ENCODE measurements at regions of chr11 and their contacts with region 1.

Region 1: DNA sequence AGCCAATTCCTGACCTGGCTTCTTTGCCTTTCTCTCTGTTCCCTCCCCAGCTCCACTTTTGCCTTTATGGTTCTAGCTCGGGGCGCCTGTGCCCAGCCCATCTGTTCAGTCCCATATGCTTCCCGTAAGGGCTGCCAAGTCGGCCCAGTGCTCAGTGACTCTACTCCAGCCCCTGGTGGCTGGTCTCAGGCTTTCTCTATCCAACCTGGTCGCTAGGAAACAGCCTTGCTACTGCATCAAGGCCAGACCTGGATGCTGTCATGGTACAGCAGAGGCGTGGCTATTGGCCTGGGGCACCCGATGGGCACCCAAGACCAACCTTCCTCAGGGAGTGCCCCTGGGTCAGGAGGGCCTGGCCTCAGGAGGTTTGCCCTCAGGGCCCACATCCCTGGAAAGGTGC is 178.0 kb downstream of the DSCAML1 start:
- DNase-seq: no peak
- ATAC-seq: peak; percentile 13

Region 2: DNA sequence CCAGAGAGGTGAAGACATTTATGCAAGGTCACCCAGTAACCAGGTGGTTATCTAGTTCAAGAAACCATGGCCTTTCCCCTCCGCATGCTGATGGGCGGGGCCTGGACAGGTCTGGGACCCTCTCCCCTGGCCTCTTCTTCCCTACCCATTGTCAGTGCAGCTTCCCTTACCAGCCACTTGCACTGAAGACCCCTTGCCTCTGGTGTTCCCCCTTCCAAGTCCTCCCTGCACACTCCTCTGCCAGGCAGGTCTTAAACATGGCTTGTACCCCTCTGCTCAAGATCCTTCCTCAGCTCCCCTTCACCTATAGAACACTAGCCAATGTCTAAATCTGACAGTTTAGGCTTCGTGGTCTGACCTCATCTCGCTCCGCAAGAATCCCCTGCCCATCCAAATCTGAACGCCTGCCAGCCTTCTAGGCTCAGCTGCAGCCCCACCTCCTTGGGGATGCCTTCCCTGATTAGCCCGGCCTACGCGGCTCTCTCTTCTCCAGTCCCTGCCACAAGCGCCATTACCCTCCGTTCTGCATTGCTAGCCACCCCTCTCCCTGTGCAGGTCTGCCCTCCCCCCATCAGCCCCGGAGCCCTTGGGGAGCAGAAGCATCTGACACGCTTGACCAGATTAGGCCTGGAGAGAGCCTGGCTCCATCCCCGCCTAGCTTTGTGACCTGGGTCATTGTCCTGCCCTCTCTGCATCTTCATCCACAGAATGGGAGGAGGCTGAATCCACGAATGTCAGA is 35.8 kb before region 1 on chr11:
- intact Hi-C with region 1: no loop called
- DNase-seq: no peak
- ATAC-seq: peak; percentile 53

Region 3: DNA sequence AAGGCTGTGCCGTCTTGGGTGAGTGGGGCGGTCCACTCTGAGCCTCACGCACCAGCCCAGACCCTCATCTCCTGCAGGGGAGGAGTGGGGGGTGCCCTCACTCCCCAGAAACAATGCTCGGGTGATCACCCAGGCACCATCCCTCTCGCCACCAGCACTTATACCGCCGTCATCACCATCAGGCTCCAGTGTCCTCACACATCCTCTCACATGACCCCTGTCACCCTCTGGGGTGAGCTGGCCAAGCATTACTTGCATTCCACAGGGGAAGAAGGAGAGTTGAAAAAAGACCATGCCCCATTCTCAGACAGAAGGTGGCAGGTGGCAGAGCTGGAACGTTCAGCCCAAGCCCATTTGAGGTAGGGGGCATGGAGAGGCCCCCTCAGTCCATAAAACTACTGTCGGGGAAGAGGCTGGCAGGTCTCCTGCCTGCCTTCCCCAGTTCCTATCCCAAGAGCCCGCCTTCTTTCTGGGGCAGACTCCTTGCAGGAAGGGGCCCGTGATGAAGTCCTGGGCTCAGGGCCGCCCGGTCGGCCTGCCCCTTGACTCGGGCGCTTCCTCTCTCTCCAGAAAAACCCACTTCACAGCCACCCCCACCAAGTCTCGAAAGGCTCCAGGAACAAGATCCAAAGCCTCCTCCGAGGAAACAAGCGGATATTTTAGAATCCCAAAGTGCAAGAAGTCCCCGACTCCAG is 24.7 kb after region 1 on chr11:
- intact Hi-C with region 1: no loop called
- DNase-seq: no peak
- ATAC-seq: peak; percentile 73

Region 4: GRCh38 chr11:117696540-117696939 is 77.5 kb after region 1 on chr11:
- intact Hi-C with region 1: no loop called
- DNase-seq: no peak
- ATAC-seq: no peak

Region 5: DNA sequence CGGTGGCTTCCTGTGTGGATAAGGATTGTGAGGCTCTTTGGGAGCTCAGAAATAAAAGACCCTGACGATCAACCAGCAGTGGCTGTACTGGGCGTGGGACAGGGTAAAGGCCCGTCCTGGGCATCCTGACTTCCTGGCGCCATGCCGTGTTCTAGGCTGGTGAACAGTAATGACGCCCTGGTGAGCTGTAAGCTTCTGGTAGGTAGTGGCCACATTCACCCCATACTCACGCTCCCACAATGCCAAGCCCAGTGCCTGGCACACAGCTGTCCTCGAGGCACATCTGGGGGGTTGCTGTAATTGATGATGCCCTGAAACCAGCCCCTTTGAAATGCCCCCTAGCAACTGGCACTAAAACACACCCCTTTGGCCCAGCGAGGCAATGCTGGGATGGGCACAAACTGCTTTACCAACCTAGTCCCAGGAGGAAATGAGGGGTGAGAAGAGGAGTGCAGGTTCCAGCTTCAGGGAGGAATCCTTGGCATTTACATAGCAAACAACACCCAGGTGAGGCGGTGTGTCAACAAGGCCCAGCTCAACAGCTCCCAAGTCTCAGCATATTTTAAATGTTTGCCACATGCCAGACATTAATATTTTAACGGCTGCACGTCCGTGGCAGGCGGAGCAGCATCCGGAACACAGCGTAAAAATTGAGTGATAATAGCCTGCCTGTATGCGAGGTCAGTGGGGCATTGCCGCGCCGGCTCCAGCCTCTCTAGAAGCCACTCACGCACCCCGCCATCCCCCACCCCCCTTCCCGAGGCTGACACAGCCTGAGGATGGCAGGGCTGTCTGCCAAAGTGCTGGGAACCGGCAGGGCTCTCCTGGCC is 98.7 kb after region 1 on chr11:
- intact Hi-C with region 1: loop called (anchors 10 kb)
- DNase-seq: no peak
- ATAC-seq: peak; percentile 23